ENCODE measurements at regions of chr6 and their contacts with region 1.

Region 1: DNA sequence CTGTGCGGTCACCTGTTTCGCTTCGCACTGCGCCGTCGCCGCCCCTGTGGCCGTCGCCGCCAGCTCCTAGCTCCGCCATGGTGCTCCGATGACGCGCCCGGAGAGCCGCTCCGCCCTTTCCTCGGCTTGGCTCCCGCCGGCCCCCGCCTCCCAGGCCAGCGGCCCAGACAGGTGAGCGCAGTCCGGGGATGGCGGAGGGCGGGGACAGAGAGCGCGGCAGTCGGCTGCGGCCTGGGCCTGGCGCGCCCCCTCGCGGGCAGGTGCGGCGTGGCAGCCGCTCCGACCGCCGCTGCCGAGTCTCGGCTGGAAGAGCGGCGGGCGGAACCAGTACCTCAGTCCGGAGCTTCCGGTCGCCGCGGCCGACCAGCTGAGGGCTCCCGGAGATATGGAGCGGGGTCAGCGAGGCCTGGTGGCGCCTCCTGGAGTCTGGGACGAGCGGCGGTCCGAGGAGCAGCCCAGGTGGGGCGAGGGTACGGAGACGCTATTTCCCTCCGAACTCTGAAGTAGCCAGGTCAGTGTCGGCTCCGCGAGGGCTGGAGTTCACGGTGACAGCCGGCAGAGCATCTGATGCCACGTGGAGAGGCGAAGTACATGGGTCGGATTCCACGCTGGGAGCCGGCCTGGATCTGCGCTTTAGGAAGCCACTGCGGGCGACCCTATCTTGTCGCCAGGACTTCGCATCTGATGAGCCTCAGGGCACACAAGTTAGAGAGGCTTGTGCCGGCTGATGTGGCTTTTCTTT is at the start of gene MAP7:
- DNase-seq: peak; percentile 28 to 93 (median 50)

Region 2: DNA sequence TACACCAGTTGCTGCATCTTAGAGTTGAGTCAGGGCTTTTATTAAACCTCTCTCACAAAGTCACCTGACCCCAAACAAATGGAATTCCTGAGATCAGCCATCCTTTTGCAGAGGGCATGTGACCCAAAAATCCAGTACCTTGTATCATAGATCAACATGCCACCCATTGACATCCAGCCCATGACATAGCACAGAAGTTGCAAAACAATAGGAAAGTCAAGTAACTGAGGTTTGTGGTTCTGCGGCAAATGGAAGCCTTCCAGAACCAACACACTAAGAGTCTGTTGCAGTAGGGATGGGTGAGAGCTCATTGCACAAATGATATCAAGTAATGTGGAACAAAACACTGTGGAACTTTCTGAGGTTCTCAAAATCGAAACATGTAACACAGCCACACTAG is 587.8 kb before region 1 on chr6:
- intact Hi-C with region 1: no loop called
- DNase-seq: no peak

Region 3: GRCh38 chr6:136289579-136290409 is 260.7 kb before region 1 on chr6 and contains the start of gene BCLAF1:
- intact Hi-C with region 1: loop called (anchors 2 kb)
- DNase-seq: peak; percentile 99 to 100 (median 100)

Region 4: DNA sequence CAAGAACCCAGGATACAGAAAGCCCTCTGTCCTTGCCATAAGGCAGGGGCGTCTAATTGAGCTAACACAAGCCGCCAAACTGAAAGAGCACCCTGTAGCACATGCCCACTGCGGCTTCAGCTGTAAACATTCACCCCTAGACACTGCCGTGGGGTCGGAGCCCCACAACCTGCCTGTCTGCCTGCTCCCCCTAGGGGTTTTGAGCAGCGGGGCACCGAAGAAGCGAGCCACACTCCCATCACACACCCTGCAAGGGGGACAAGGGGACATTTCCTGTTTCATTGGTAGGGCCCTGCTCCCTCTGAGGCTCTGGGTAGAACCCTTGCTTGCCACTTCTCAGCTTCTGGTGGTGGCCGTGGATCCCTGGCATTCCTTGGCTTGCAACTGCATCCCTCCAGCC is 215.6 kb before region 1 on chr6:
- intact Hi-C with region 1: loop called (anchors 10 kb)
- DNase-seq: peak in 2 of 10 donors; percentile 19 to 74

Measured in posterior cingulate gyrus (tissue), 11 donors.